Testis (tissue), 5 donors: ENCODE measurements at regions of chr12 and their contacts with region 1.

Region 1: GRCh38 chr12:121811434-121812319 is 7.9 kb downstream of the SETD1B start:
- DNase-seq: peak; percentile 68
- H3K4me3 ChIP-seq: peak overlapping the region; percentile 50 to 74
- H3K27ac ChIP-seq: peak overlapping the region; percentile 63 to 64
- H3K4me1 ChIP-seq: peaks cover 34% of the 10 kb centered on the region
- H3K27me3 ChIP-seq: no peaks in the 10 kb centered on the region
- CTCF ChIP-seq: peak; percentile 95 to 100 (median 98)
- POLR2A ChIP-seq: no peak

Region 2: GRCh38 chr12:121793838-121794533 is 17.7 kb before region 1 on chr12:
- intact Hi-C with region 1: loop called (anchors 2 kb)
- DNase-seq: peak; percentile 91
- H3K4me3 ChIP-seq: peak overlapping the region; percentile 53 to 59
- H3K27ac ChIP-seq: peak overlapping the region in 1 of 2 donors; percentile 78
- H3K4me1 ChIP-seq: peaks cover 55% of the 10 kb centered on the region
- H3K27me3 ChIP-seq: no peaks in the 10 kb centered on the region
- CTCF ChIP-seq: peak; percentile 97 to 100 (median 99)
- POLR2A ChIP-seq: no peak